Naive thymus-derived CD4-positive, alpha-beta T cell (primary cell): ENCODE measurements at regions of chr16 and their contacts with region 1.

Region 1: GRCh38 chr16:56931892-56932720 is at the start of gene HERPUD1:
- DNase-seq: peak; percentile 96 to 99 (median 99)
- ATAC-seq: peak; percentile 96
- H3K4me3 ChIP-seq: peak within 1 kb of the TSS; percentile 94
- H3K4me3 Mint-ChIP-seq: peak within 1 kb of the TSS; percentile 97 to 99 (median 98)
- H3K27ac ChIP-seq: peak within 1 kb of the TSS; percentile 98
- H3K27ac Mint-ChIP-seq: peak within 1 kb of the TSS; percentile 96 to 99 (median 97)
- H3K4me1 ChIP-seq: peaks cover 13 to 18% of the 10 kb centered on the region in 2 donors
- H3K4me1 Mint-ChIP-seq: peaks cover 18 to 52% (median 38%) of the 10 kb centered on the region in 7 donors
- H3K27me3 ChIP-seq: no peaks in the 10 kb centered on the region
- H3K27me3 Mint-ChIP-seq: no peaks in the 10 kb centered on the region
- total RNA-seq, gene HERPUD1: 102 to 226 (median 131) TPM

Region 2: GRCh38 chr16:56519459-56520250 is 412.5 kb before region 1 on chr16 and contains the start of gene BBS2:
- CTCF ChIA-PET with region 1: no interaction called
- POLR2A ChIA-PET with region 1: no interaction called
- intact Hi-C with region 1: loop called in 1 of 2 experiments (anchors 10 kb)
- DNase-seq: peak; percentile 84 to 93 (median 92)
- ATAC-seq: peak; percentile 89
- H3K4me3 ChIP-seq: peak within 1 kb of the TSS; percentile 99
- H3K4me3 Mint-ChIP-seq: peak within 1 kb of the TSS; percentile 82 to 91 (median 86)
- H3K27ac ChIP-seq: peak within 1 kb of the TSS; percentile 92
- H3K27ac Mint-ChIP-seq: peak within 1 kb of the TSS; percentile 60 to 95 (median 90)
- H3K4me1 ChIP-seq: peaks cover 8 to 26% of the 10 kb centered on the region in 2 donors
- H3K4me1 Mint-ChIP-seq: peaks cover 11 to 62% (median 52%) of the 10 kb centered on the region in 7 donors
- H3K27me3 ChIP-seq: no peaks in the 10 kb centered on the region
- H3K27me3 Mint-ChIP-seq: no peaks in the 10 kb centered on the region
- total RNA-seq, gene BBS2: 14.7 to 130 (median 84.0) TPM

Region 3: DNA sequence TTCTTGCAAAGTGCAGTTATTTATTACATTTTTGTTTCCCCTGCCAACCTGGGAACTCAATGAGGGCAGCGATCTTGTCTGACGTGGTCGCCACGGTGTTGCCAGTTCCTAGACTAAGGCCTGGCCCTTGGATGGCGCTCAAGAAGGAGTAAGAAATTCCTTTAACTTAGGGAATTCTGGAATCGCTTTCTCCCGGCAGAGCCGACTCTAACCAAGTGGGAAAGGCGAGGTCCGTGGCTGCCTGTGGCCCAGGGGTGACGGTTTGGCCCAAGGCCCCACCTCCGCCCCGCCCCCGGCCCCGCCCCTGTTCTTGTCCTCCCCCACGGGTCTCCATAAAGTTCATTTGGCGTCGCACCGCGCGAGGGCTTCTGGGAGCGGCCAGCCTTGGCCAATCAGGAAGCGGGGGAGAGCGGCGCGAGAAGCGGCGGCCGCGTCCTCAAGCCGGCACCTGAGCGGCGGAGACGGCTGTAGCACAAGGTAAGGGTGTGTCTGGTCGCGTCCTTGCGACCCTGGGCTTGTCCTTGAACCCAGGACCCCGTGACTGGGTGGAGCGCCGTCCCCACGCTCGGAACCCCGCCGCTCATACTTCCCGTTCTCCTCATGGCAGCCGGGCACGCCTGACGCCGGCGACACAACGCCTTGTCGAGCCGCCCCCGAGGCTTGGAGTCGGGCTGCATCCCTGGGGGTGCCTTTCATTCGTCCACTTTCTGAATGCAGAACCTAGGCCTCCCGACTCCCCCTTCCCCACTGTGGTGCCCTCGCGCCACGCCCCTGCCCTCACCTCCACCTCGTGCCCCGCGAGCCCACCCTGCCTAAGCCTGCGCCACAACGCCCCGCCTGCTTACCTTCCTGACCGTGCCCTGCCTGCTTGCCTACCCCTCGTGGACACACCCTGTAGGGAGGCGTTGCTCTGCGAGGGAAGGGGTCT is 202.1 kb before region 1 on chr16 and contains the start of gene NUP93:
- CTCF ChIA-PET with region 1: no interaction called
- POLR2A ChIA-PET with region 1: no interaction called
- intact Hi-C with region 1: loop called (anchors 5 kb)
- DNase-seq: peak; percentile 76 to 90 (median 88)
- ATAC-seq: peak; percentile 99
- H3K4me3 ChIP-seq: peak within 1 kb of the TSS; percentile 82
- H3K4me3 Mint-ChIP-seq: peak within 1 kb of the TSS in 1 of 10 donors; percentile 90
- H3K27ac ChIP-seq: peak within 1 kb of the TSS; percentile 84
- H3K27ac Mint-ChIP-seq: peak within 1 kb of the TSS in 7 of 9 donors; percentile 82 to 98 (median 94)
- H3K4me1 ChIP-seq: peaks cover 22 to 23% of the 10 kb centered on the region in 2 donors
- H3K4me1 Mint-ChIP-seq: peaks cover 10 to 31% (median 26%) of the 10 kb centered on the region in 7 donors
- H3K27me3 ChIP-seq: no peaks in the 10 kb centered on the region
- H3K27me3 Mint-ChIP-seq: no peaks in the 10 kb centered on the region
- total RNA-seq, gene NUP93: 53.0 to 90.5 (median 58.3) TPM

Region 4: GRCh38 chr16:56911771-56912571 is 20.1 kb before region 1 on chr16:
- CTCF ChIA-PET with region 1: no interaction called
- POLR2A ChIA-PET with region 1: interaction called, 38 read pairs
- intact Hi-C with region 1: loop called in 1 of 2 experiments (anchors 1 kb)
- DNase-seq: no peak
- ATAC-seq: peak; percentile 71
- H3K4me3 ChIP-seq: no peak overlapping the region
- H3K4me3 Mint-ChIP-seq: no peak overlapping the region
- H3K27ac ChIP-seq: no peak overlapping the region
- H3K27ac Mint-ChIP-seq: peak overlapping the region in 1 of 9 donors; percentile 30
- H3K4me1 ChIP-seq: peaks cover 7 to 18% of the 10 kb centered on the region in 2 donors
- H3K4me1 Mint-ChIP-seq: peaks cover 7 to 38% (median 24%) of the 10 kb centered on the region in 7 donors
- H3K27me3 ChIP-seq: no peaks in the 10 kb centered on the region
- H3K27me3 Mint-ChIP-seq: peaks cover 0 to 17% (median 0%) of the 10 kb centered on the region in 5 donors

Region 5: DNA sequence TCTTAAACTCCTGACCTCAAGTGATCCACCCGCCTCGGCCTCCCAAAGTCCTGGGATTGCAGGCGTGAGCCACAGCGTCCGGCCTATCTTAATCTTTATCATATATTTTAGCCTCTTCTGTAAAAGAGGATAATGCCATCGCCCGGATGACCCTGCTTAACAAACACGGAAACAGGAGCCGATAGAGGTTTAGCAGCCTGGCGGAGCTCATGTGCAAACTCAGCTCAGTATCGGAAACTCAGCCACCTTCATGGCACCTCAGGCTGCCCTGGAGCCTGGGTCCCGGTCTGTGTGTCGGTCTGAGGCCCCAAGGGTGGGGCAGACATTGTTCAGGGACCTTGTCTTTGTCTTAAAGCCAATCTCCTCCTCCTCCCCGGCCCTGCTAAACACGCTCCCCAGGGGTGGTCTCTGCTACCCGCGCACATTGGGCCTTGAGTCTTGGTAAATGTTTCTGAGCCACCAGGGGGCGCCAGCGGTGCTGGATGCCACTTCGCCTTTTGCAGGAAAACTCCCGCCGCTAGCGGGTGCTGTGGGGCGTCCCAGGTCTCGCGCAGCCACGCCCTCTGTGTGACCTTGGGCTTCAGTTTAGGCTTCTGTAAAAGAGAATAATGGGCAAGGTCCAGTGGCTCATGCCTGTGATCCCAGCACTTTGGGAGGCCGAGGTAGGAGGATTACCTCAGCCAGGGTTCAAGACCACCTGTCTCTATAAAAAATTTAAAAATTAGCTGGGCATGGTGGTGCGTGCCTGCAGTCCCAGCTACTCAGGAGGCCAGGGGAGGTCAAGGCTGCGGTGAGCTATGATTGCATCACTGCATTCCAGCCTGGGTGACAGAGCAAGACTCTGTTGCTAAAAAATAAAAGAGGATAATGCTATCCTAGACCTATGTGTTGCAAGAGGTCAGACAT is 32.4 kb after region 1 on chr16:
- CTCF ChIA-PET with region 1: interaction called, 6 read pairs
- POLR2A ChIA-PET with region 1: interaction called, 11 read pairs
- intact Hi-C with region 1: loop called in 1 of 2 experiments (anchors 1 kb)
- DNase-seq: peak; percentile 84 to 96 (median 91)
- ATAC-seq: peak; percentile 99
- H3K4me3 ChIP-seq: no peak overlapping the region
- H3K4me3 Mint-ChIP-seq: peak overlapping the region in 4 of 10 donors; percentile 6 to 62 (median 38)
- H3K27ac ChIP-seq: no peak overlapping the region
- H3K27ac Mint-ChIP-seq: peak overlapping the region in 8 of 9 donors; percentile 60 to 91 (median 82)
- H3K4me1 ChIP-seq: peaks cover 7 to 19% of the 10 kb centered on the region in 2 donors
- H3K4me1 Mint-ChIP-seq: peaks cover 21 to 27% (median 23%) of the 10 kb centered on the region in 7 donors
- H3K27me3 ChIP-seq: no peaks in the 10 kb centered on the region
- H3K27me3 Mint-ChIP-seq: peaks cover 0 to 4% (median 0%) of the 10 kb centered on the region in 5 donors

Region 6: GRCh38 chr16:57128771-57129389 is 196.8 kb after region 1 on chr16:
- CTCF ChIA-PET with region 1: no interaction called
- POLR2A ChIA-PET with region 1: no interaction called
- intact Hi-C with region 1: no loop called
- DNase-seq: peak in 6 of 9 donors; percentile 26 to 35 (median 32)
- ATAC-seq: peak; percentile 66
- H3K4me3 ChIP-seq: peak overlapping the region; percentile 2
- H3K4me3 Mint-ChIP-seq: peak overlapping the region; percentile 27 to 84 (median 59)
- H3K27ac ChIP-seq: peak overlapping the region; percentile 55
- H3K27ac Mint-ChIP-seq: peak overlapping the region; percentile 83 to 94 (median 91)
- H3K4me1 ChIP-seq: peaks cover 76 to 82% of the 10 kb centered on the region in 2 donors
- H3K4me1 Mint-ChIP-seq: peaks cover 50 to 98% (median 85%) of the 10 kb centered on the region in 7 donors
- H3K27me3 ChIP-seq: no peaks in the 10 kb centered on the region
- H3K27me3 Mint-ChIP-seq: no peaks in the 10 kb centered on the region

Region 7: GRCh38 chr16:57185944-57186871 is 254.1 kb after region 1 on chr16 and contains the starts of genes PSME3IP1 and RSPRY1:
- CTCF ChIA-PET with region 1: no interaction called
- POLR2A ChIA-PET with region 1: interaction called, 20 read pairs
- intact Hi-C with region 1: loop called (anchors 1 to 2 kb)
- DNase-seq: peak; percentile 86 to 100 (median 99)
- ATAC-seq: peak; percentile 92
- H3K4me3 ChIP-seq: peak within 1 kb of the TSS; percentile 95
- H3K4me3 Mint-ChIP-seq: peak within 1 kb of the TSS; percentile 93 to 100 (median 98)
- H3K27ac ChIP-seq: peak within 1 kb of the TSS; percentile 94
- H3K27ac Mint-ChIP-seq: peak within 1 kb of the TSS; percentile 93 to 99 (median 95)
- H3K4me1 ChIP-seq: peaks cover 20 to 24% of the 10 kb centered on the region in 2 donors
- H3K4me1 Mint-ChIP-seq: peaks cover 41 to 77% (median 59%) of the 10 kb centered on the region in 7 donors
- H3K27me3 ChIP-seq: no peaks in the 10 kb centered on the region
- H3K27me3 Mint-ChIP-seq: peaks cover 0 to 3% (median 0%) of the 10 kb centered on the region in 5 donors
- total RNA-seq, gene PSME3IP1: 109 to 159 (median 140) TPM
- total RNA-seq, gene RSPRY1: 24.1 to 40.5 (median 33.6) TPM

Region 8: DNA sequence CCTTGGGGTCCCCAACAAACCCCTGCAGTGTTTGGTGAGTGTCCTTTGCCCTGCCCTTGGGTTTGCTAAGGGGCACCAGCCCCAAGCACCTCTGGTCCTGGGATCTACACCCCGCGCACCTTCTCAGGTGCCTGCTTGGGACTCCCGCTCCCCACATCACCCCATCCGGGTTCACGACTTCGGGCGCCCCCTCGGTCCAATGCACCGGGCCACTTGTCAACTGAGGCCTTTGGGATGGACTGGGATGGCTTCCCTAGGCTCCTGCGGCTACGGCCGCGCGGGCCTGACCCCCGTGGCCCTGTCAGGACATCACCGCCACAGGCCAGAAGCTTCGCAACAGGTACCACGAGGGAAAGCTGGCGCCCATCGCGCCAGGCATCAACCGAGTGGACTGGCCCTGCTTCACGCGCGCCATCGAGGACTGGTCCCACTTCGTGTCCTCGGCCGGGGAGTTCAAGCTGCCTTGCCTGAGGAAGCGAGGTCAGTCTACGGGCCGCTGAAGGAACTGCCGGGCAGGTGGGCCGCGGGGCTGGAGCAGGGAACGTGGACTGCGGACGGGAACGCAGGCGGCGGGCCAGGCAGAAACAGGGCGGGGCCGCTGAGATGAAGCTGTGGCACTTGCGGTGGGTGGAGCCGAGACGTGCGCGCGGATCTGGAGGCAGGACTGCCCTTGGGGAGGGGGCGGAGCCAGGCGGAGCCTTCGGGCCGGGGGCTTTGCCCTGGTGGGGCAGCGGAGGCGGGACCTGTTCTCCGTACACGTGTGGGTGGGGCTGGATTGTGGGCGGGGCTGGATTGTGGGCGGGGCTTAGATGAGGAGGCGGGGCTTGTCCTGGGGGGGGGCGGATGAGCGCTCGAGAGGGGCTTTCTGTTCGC is 1052.5 kb after region 1 on chr16:
- CTCF ChIA-PET with region 1: no interaction called
- POLR2A ChIA-PET with region 1: no interaction called
- intact Hi-C with region 1: loop called in 1 of 2 experiments (anchors 5 kb)
- DNase-seq: peak; percentile 75 to 93 (median 90)
- ATAC-seq: peak; percentile 99
- H3K4me3 ChIP-seq: peak overlapping the region; percentile 63
- H3K4me3 Mint-ChIP-seq: peak overlapping the region; percentile 84 to 94 (median 91)
- H3K27ac ChIP-seq: peak overlapping the region; percentile 64
- H3K27ac Mint-ChIP-seq: peak overlapping the region; percentile 37 to 93 (median 72)
- H3K4me1 ChIP-seq: peaks cover 6% of the 10 kb centered on the region in 2 donors
- H3K4me1 Mint-ChIP-seq: peaks cover 2 to 21% (median 8%) of the 10 kb centered on the region in 7 donors
- H3K27me3 ChIP-seq: no peaks in the 10 kb centered on the region
- H3K27me3 Mint-ChIP-seq: peaks cover 0 to 21% (median 0%) of the 10 kb centered on the region in 5 donors